Upper lobe of right lung (tissue), 1 donor: ENCODE measurements at regions of chr2 and their contacts with region 1.

Region 1: DNA sequence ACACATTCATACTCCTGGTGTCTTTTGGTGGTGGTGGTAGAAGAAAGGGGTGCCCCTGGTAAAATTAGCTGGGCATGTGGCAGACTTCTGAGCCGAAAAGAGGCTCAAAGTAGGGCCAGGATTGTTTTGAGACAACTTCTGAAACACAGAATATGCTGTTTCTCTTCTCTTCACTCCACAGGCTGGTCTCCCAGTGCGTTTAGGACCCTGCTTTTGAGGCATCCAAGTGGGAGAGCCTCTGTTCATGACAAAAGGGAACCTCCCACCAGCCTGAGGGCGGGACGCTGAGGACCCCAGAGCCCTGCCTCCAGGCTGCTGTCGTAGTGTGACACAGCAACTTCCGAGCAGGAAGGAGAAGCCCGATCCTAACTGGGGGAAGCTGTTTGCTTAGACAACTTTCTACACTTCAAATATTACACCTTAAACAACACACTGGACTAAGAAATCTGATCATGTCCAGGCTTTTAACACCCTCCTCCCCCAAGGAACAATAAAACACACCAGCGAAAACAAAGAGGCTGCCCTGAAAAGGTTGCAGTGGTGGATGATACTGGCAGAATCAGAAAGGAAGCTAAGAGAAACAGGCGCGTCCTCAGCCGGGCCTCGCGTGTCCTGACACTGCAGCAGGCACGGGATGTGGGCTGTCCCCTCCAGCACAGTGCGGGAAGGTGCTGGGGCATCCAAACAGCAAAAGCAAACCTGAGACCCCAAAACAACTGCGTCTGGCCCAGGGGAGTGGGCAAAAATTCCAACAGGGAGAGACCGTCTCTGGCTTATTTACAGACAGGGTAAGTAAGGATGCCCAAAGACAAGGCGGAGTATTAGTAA is 9.3 kb downstream of the SERTAD2 start:
- DNase-seq: peak; percentile 84
- ATAC-seq: peak; percentile 87
- H3K4me3 ChIP-seq: peak overlapping the region; percentile 51
- H3K27ac ChIP-seq: peak overlapping the region; percentile 88
- H3K4me1 ChIP-seq: peaks cover 43% of the 10 kb centered on the region
- H3K27me3 ChIP-seq: no peaks in the 10 kb centered on the region
- CTCF ChIP-seq: no peak

Region 2: DNA sequence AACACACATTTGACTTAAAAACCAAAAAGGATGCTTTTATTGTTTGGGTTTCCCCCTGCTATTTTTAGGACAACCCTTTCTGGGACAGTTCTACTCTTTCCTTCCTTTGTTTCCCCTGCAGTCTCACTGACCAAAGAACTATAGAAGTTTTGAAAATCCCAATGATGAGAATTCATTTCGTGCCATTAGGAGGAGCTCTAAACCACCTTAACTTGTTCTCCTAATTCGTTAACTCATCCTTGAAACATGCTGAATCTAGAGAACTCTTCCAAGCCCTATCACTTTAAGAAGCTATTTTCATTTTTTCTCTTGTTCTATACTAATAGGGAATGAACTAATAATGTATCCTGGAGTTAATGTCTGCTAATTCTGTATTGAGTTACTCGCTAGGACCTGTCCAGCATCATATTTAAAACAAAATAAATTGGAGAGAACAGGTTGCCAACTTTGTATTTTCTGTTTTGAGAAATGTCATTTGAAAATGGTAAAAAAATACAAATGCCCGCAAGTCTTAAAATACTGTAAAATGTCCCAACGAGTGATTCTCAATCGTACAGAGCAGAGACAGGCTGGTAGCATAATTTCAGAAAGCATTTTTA is 57.4 kb before region 1 on chr2:
- intact Hi-C with region 1: loop called (anchors 10 kb)
- DNase-seq: no peak
- ATAC-seq: peak; percentile 76
- H3K4me3 ChIP-seq: no peak overlapping the region
- H3K27ac ChIP-seq: no peak overlapping the region
- H3K4me1 ChIP-seq: no peaks in the 10 kb centered on the region
- H3K27me3 ChIP-seq: no peaks in the 10 kb centered on the region
- CTCF ChIP-seq: peak; percentile 63